HepG2 (cell line): ENCODE measurements at regions of chr4 and their contacts with region 1.

Region 1: DNA sequence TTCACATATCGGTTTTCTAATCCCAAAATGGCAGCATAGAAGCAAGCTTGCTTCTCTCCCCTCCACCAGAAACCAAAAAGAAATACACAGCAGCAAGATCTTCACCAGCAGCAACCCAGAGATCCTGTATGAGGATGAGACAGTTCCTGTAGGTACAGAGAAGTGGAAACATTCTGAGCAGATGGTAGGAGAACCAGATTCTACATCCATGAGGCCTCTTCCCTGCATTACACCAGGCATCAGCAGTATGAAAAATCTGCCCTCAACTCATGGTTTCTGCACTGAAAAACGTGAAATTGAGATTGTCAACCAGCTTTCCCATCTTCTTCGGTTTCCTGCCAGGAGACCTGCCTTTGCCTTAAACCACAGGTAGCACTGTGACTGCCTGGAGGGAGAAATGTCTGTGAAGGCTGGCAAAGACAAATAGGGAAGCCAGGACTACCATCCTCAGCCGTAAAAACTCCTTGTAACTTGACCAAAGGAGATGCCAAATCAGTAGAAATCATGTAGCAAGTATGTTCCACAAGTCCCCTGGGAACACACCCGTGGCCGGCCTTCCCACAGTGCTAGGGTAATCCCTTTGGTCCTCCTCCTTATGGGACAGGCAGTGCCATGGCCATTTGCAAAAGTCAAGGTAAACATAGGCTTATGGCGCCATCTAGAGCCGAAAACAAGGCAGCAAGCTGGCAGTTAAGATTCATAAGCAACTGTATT is 24.0 kb upstream of the MTHFD2L start:
- DNase-seq: peak; percentile 54
- ATAC-seq: peak; percentile 87
- H3K4me3 ChIP-seq: no peak overlapping the region
- H3K27ac ChIP-seq: no peak overlapping the region
- H3K4me1 ChIP-seq: no peaks in the 10 kb centered on the region
- H3K27me3 ChIP-seq: no peaks in the 10 kb centered on the region
- CTCF ChIP-seq: peak; percentile 87
- EP300 ChIP-seq: no peak
- POLR2A ChIP-seq: no peak
- RAD21 ChIP-seq: peak; percentile 74

Region 2: GRCh38 chr4:73573794-73574406 is 560.0 kb before region 1 on chr4:
- CTCF ChIA-PET with region 1: no interaction called
- POLR2A ChIA-PET with region 1: no interaction called
- in situ Hi-C with region 1: no loop called
- intact Hi-C with region 1: loop called (anchors 10 kb)
- DNase-seq: peak; percentile 79
- ATAC-seq: peak; percentile 97
- H3K4me3 ChIP-seq: no peak overlapping the region
- H3K27ac ChIP-seq: no peak overlapping the region
- H3K4me1 ChIP-seq: no peaks in the 10 kb centered on the region
- H3K27me3 ChIP-seq: no peaks in the 10 kb centered on the region
- CTCF ChIP-seq: peak; percentile 92
- EP300 ChIP-seq: no peak
- POLR2A ChIP-seq: no peak
- RAD21 ChIP-seq: peak; percentile 89

Region 3: DNA sequence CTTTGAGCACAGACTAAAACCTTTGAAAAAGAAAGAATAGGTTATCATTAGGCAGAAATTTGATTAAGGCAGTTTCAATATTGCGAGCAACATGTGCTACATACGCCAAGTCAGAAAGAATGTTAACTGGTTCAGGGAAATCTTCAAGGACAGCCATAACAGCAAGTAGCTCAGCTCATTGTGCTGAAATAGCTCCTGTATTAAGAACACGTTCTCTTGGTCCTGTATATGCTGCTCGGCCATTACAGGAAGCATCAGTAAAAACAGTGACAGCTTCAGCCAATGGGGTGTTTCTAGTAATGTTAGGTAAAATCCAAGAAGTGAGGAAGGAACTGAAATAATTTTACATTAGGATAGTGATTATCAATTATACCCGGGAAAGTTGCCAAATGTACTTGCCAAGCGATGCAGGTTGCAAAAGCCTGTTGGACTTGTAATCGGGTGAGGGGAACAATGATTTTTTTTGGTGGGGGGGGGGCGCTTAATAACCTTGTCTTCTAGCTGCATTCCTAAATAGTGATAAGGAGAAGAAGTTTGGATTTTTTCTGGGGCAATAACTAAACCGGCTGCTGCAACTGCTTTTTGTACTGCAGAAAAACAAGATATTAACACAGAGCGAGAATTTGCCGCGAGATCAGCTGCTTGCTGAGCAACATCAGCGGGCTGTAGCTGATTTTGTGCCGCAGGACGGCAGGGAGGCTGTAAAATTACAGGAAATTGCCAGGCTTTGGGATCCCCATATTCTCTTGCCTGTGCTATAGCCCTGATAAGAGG is 464.3 kb before region 1 on chr4:
- CTCF ChIA-PET with region 1: no interaction called
- POLR2A ChIA-PET with region 1: no interaction called
- in situ Hi-C with region 1: no loop called
- intact Hi-C with region 1: loop called (anchors 2 kb)
- DNase-seq: no peak
- ATAC-seq: no peak
- H3K4me3 ChIP-seq: no peak overlapping the region
- H3K27ac ChIP-seq: no peak overlapping the region
- H3K4me1 ChIP-seq: no peaks in the 10 kb centered on the region
- H3K27me3 ChIP-seq: peaks cover 2 to 15% of the 10 kb centered on the region in 2 experiments; a peak in 3 of 5 replicates
- CTCF ChIP-seq: no peak
- EP300 ChIP-seq: no peak
- POLR2A ChIP-seq: no peak
- RAD21 ChIP-seq: no peak

Region 4: GRCh38 chr4:73729534-73730165 is 404.3 kb before region 1 on chr4:
- CTCF ChIA-PET with region 1: interaction called, 47 read pairs
- POLR2A ChIA-PET with region 1: no interaction called
- in situ Hi-C with region 1: loop called (anchors 5 kb)
- intact Hi-C with region 1: loop called (anchors 1 kb)
- DNase-seq: peak; percentile 47
- ATAC-seq: peak; percentile 95
- H3K4me3 ChIP-seq: no peak overlapping the region
- H3K27ac ChIP-seq: no peak overlapping the region
- H3K4me1 ChIP-seq: no peaks in the 10 kb centered on the region
- H3K27me3 ChIP-seq: peaks cover 0 to 3% of the 10 kb centered on the region in 2 experiments; a peak in 2 of 5 replicates
- CTCF ChIP-seq: peak; percentile 78
- EP300 ChIP-seq: no peak
- POLR2A ChIP-seq: no peak
- RAD21 ChIP-seq: no peak

Region 5: GRCh38 chr4:73864365-73864764 is 269.6 kb before region 1 on chr4:
- CTCF ChIA-PET with region 1: no interaction called
- POLR2A ChIA-PET with region 1: no interaction called
- in situ Hi-C with region 1: no loop called
- intact Hi-C with region 1: loop called (anchors 1 kb)
- DNase-seq: peak; percentile 11
- ATAC-seq: peak; percentile 81
- H3K4me3 ChIP-seq: no peak overlapping the region
- H3K27ac ChIP-seq: no peak overlapping the region
- H3K4me1 ChIP-seq: peaks cover 8% of the 10 kb centered on the region; the same call in 1 of the 2 replicates
- H3K27me3 ChIP-seq: peaks cover 0 to 9% of the 10 kb centered on the region in 2 experiments; a peak in 2 of 5 replicates
- CTCF ChIP-seq: peak; percentile 43
- EP300 ChIP-seq: no peak
- POLR2A ChIP-seq: no peak
- RAD21 ChIP-seq: no peak

Region 6: GRCh38 chr4:74038161-74039064 is 95.5 kb before region 1 on chr4 and contains the start of gene CXCL3:
- CTCF ChIA-PET with region 1: no interaction called
- POLR2A ChIA-PET with region 1: no interaction called
- in situ Hi-C with region 1: no loop called
- intact Hi-C with region 1: loop called (anchors 5 kb)
- DNase-seq: no peak
- ATAC-seq: peak; percentile 90
- H3K4me3 ChIP-seq: peak within 1 kb of the TSS; percentile 10 to 62 (median 43); a peak in 4 of 6 replicates
- H3K27ac ChIP-seq: no peak within 1 kb of the TSS
- H3K4me1 ChIP-seq: peaks cover 15% of the 10 kb centered on the region
- H3K27me3 ChIP-seq: peaks cover 4 to 26% of the 10 kb centered on the region in 2 experiments
- CTCF ChIP-seq: peak; percentile 48
- EP300 ChIP-seq: no peak
- POLR2A ChIP-seq: no peak
- RAD21 ChIP-seq: no peak
- total RNA-seq, gene CXCL3: 0.13 TPM in 1 of 2 replicates, not detected in the other

Region 7: DNA sequence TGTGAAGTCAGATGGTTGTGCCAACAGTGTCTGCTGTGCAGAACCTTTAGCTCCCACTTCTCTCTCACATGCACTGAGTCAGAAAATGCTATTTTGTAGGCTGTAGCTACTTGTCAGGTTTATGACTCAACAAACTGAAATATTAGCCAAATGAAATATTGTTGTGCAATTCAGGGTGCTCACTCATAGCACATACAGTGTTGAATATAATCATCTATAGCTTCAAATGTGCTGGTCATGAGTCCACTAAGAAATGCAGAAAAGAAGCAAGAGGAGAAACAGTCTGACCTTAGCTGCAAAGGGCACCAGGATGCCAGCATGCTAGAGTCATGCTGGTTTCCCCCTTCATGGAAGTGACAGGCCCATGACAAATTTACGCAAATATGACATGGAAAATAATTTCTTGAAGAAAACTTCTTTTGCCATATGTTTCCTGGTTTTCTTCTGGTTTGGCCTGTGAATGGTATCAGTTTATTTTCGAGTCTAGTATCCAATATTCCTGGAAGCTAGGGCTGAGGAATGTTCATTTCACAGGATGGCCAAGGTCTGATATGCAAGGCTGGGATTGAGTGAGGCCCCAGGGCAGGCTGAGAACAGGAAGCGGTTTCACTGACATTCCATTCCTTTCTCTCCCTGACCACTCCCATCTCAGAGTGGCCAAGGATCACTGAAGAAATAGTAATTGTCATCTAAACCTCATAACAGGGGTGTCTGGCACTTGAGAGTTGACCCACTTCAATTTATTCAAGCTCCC is 24.6 kb before region 1 on chr4:
- CTCF ChIA-PET with region 1: no interaction called
- POLR2A ChIA-PET with region 1: no interaction called
- in situ Hi-C with region 1: no loop called
- intact Hi-C with region 1: no loop called
- DNase-seq: no peak
- ATAC-seq: no peak; the same call in 2 of the 3 replicates
- H3K4me3 ChIP-seq: no peak overlapping the region
- H3K27ac ChIP-seq: no peak overlapping the region
- H3K4me1 ChIP-seq: peaks cover 10% of the 10 kb centered on the region; the same call in 1 of the 2 replicates
- H3K27me3 ChIP-seq: no peaks in the 10 kb centered on the region
- CTCF ChIP-seq: no peak
- EP300 ChIP-seq: no peak
- POLR2A ChIP-seq: no peak
- RAD21 ChIP-seq: no peak